ENCODE measurements at regions of chr5 and their contacts with region 1.

Region 1: DNA sequence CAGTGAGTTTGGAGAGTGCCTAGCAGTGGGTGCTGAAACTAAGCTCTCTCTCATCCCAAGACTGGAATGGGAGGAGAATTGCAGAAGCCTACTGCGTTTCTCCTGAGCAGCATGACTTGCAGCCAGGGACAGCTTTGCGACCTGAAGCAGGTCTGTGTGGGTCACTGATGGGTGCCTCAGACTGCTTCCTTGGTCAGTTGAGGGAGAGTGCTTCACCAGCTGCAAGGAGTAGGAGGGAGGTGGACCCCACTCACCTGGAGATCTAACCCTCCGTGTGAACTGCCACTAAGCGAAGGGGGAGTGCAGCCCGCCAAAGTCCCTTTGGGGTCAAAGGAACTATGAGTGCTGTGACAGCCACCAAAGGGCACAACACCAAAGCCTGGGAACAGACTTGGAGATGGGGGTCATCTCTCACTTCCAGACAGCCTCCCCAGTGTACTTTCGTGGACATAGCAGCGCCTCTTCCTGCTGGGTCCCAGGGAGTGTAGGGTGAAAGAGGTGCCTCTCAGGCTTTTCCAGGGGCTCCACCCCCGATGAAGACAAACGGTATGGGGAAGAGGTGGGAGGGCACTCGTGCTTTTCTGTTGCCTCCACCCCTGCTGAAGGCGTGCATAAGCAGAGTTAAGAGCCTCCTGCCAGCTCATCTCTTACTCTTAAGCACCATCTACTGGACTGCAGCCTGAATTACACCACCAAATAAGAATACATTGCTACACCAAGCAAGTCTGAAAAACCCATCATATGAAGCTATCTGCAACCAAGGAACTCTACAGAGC is 34.3 kb upstream of the MACIR start:
- DNase-seq: peak; percentile 16
- ATAC-seq: peak; percentile 96
- H3K4me3 ChIP-seq: no peak overlapping the region
- H3K27ac ChIP-seq: no peak overlapping the region
- H3K4me1 ChIP-seq: no peaks in the 10 kb centered on the region
- H3K27me3 ChIP-seq: no peaks in the 10 kb centered on the region
- CTCF ChIP-seq: peak; percentile 70 to 85 (median 82)
- EP300 ChIP-seq: no peak
- POLR2A ChIP-seq: no peak
- RAD21 ChIP-seq: peak; percentile 84

Region 2: GRCh38 chr5:102583276-102584124 is 640.8 kb before region 1 on chr5:
- CTCF ChIA-PET with region 1: interaction called, 9 read pairs
- POLR2A ChIA-PET with region 1: no interaction called
- RAD21 ChIA-PET with region 1: interaction called, 3 read pairs
- SMC1A ChIA-PET with region 1: no interaction called
- in situ Hi-C with region 1: no loop called
- intact Hi-C with region 1: loop called (anchors 2 kb)
- DNase-seq: no peak
- ATAC-seq: peak; percentile 34; the same call in 1 of the 3 replicates
- H3K4me3 ChIP-seq: no peak overlapping the region
- H3K27ac ChIP-seq: no peak overlapping the region
- H3K4me1 ChIP-seq: no peaks in the 10 kb centered on the region
- H3K27me3 ChIP-seq: no peaks in the 10 kb centered on the region
- CTCF ChIP-seq: peak in 2 of 3 experiments; percentile 23 to 32; a peak in 3 of 6 replicates
- EP300 ChIP-seq: no peak
- POLR2A ChIP-seq: no peak
- RAD21 ChIP-seq: 0 out of 2 replicates have a peak, but pooled peaks have one; percentile 6

Region 3: DNA sequence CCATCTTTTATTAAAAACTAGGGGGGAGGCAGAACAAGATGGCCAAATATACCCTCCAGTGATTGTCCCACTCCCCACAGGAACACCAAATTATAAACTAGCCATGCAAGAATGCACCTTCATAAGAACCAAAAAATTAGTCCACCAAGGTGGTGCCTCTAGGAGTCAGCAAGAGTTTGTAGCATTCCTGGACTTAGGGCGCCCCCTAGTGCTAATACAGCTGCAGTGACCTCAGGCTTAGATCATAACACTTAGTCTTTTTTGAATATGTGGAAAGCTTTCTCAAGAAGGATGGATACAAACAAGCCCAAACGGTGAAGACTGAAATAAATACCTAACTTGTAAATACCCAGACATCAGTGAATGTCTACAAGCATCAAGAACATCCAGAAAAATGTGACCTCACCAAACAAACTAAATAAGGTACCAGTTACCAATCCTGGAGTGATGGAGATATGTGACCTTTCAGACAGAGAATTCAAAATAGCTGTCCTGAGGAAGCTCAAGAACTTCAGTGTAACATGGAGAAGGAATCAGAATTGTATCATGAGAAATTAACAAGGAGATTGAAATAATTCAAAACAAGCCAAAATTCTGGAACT is 84.9 kb before region 1 on chr5:
- CTCF ChIA-PET with region 1: interaction called, 26 read pairs
- POLR2A ChIA-PET with region 1: no interaction called
- RAD21 ChIA-PET with region 1: interaction called, 3 read pairs
- SMC1A ChIA-PET with region 1: interaction called, 7 read pairs
- in situ Hi-C with region 1: no loop called
- intact Hi-C with region 1: no loop called
- DNase-seq: peak; percentile 30
- ATAC-seq: peak; percentile 100
- H3K4me3 ChIP-seq: no peak overlapping the region
- H3K27ac ChIP-seq: no peak overlapping the region
- H3K4me1 ChIP-seq: no peaks in the 10 kb centered on the region
- H3K27me3 ChIP-seq: no peaks in the 10 kb centered on the region
- CTCF ChIP-seq: peak; percentile 83 to 96 (median 94); a peak in 5 of 6 replicates
- EP300 ChIP-seq: no peak
- POLR2A ChIP-seq: no peak
- RAD21 ChIP-seq: peak; percentile 98

Region 4: DNA sequence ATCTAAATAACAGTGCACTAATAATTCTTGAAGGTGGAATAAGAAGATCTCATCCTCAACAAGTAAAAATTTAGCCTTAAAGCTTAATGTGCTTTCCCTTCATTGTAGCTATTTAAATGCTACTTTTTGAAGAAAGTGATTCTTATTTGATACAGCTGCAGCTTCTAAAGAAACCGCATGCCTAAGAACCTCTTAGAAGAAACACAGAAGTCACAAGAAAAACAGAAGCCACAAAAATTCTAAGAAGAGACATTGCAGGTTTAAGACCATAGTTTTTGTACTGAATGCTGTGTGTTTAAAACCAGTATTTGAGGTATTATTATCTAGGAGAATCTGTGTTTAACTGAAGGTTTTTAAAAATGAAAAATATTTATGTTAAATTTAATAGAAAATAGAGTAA is 35.9 kb before region 1 on chr5:
- CTCF ChIA-PET with region 1: interaction called, 13 read pairs
- POLR2A ChIA-PET with region 1: no interaction called
- RAD21 ChIA-PET with region 1: no interaction called
- SMC1A ChIA-PET with region 1: no interaction called
- in situ Hi-C with region 1: no loop called
- intact Hi-C with region 1: no loop called
- DNase-seq: no peak
- ATAC-seq: no peak
- H3K4me3 ChIP-seq: no peak overlapping the region
- H3K27ac ChIP-seq: no peak overlapping the region
- H3K4me1 ChIP-seq: no peaks in the 10 kb centered on the region
- H3K27me3 ChIP-seq: no peaks in the 10 kb centered on the region
- CTCF ChIP-seq: no peak
- EP300 ChIP-seq: no peak
- POLR2A ChIP-seq: no peak
- RAD21 ChIP-seq: no peak

Region 5: GRCh38 chr5:103258368-103258956 is 34.2 kb after region 1 on chr5 and contains the start of gene MACIR:
- CTCF ChIA-PET with region 1: interaction called, 17 read pairs
- POLR2A ChIA-PET with region 1: no interaction called
- RAD21 ChIA-PET with region 1: interaction called, 7 read pairs
- SMC1A ChIA-PET with region 1: no interaction called
- in situ Hi-C with region 1: no loop called
- intact Hi-C with region 1: no loop called
- DNase-seq: peak; percentile 88
- ATAC-seq: peak; percentile 92
- H3K4me3 ChIP-seq: peak within 1 kb of the TSS; percentile 87
- H3K27ac ChIP-seq: peak within 1 kb of the TSS; percentile 34
- H3K4me1 ChIP-seq: peaks cover 3% of the 10 kb centered on the region; the same call in 1 of the 2 replicates
- H3K27me3 ChIP-seq: no peaks in the 10 kb centered on the region
- CTCF ChIP-seq: no peak; a peak in 1 of 6 replicates
- EP300 ChIP-seq: no peak
- POLR2A ChIP-seq: peak; percentile 82
- RAD21 ChIP-seq: 0 out of 2 replicates have a peak, but pooled peaks have one; percentile 2
- polyA plus RNA-seq, gene MACIR: 2.1 to 3.8 TPM

Region 6: GRCh38 chr5:103532086-103532734 is 307.9 kb after region 1 on chr5:
- CTCF ChIA-PET with region 1: no interaction called
- POLR2A ChIA-PET with region 1: no interaction called
- RAD21 ChIA-PET with region 1: no interaction called
- SMC1A ChIA-PET with region 1: no interaction called
- in situ Hi-C with region 1: no loop called
- intact Hi-C with region 1: no loop called
- DNase-seq: no peak
- ATAC-seq: no peak
- H3K4me3 ChIP-seq: no peak overlapping the region
- H3K27ac ChIP-seq: no peak overlapping the region
- H3K4me1 ChIP-seq: no peaks in the 10 kb centered on the region
- H3K27me3 ChIP-seq: no peaks in the 10 kb centered on the region; a peak in 1 of 4 replicates
- CTCF ChIP-seq: no peak
- EP300 ChIP-seq: no peak
- POLR2A ChIP-seq: no peak
- RAD21 ChIP-seq: no peak